MCF 10A (cell line): ENCODE measurements at regions of chr1 and their contacts with region 1.

Region 1: DNA sequence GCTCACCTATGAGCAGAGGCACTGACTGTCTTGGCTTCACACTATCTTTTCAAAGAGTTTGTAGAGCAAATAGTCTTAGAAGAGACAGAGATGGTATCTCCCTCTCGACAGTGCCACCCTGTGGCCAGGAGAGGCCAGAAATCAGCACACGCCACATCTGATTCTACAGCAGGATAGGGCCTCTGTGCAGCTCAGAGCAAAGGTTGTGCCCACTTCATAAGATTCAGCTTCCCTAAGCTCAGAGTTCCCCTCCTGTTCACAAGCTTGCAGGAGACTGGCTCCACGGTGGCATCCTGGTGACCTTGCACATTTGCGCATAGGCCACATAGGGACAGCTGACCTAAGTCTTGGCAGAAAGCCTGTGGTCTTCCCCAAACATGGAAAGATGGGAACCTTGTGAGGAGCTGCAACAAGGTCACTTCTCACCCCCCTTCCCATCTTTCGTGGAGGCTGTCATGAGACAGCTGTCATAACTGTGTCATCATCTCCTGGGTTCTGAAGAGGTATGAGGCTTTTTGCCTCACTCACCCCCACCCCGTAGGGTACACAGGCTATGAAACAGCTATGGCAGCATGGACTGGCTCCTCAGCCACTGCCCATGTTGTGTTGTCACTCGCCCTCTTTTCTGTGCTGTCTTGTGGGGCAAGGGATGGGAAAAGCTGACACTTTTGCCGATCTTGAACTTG is 3.0 kb downstream of the ITLN2 start:
- DNase-seq: peak; percentile 82
- H3K4me3 Mint-ChIP-seq: no peak overlapping the region
- H3K27ac Mint-ChIP-seq: peak overlapping the region; percentile 3
- H3K4me1 Mint-ChIP-seq: peaks cover 55% of the 10 kb centered on the region
- H3K27me3 Mint-ChIP-seq: no peaks in the 10 kb centered on the region
- CTCF ChIP-seq: peak; percentile 93

Region 2: DNA sequence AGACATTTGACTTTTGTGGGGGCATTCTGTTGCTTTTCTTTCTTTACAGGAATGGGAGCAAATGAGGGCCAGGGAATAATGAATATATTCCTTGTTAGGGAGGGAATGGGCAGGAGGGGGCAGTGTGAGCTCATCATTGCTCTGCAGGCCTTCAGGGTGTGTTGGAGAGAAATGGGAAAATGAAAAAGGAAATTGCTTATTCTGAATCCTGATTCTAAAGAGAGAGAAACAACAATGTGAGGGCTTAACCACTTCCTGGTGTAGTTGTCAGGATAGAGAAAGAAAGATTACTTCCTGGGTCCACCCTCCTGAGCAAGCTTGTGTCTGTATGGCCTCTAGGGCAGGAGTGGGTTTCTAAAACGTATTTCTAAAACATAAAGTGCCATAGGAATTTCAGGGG is 522.9 kb before region 1 on chr1:
- CTCF ChIA-PET with region 1: interaction called, 3 read pairs
- POLR2A ChIA-PET with region 1: no interaction called
- intact Hi-C with region 1: loop called (anchors 5 kb)
- DNase-seq: peak; percentile 70
- H3K4me3 Mint-ChIP-seq: no peak overlapping the region
- H3K27ac Mint-ChIP-seq: no peak overlapping the region
- H3K4me1 Mint-ChIP-seq: no peaks in the 10 kb centered on the region
- H3K27me3 Mint-ChIP-seq: peaks cover 8% of the 10 kb centered on the region
- CTCF ChIP-seq: peak; percentile 93

Region 3: DNA sequence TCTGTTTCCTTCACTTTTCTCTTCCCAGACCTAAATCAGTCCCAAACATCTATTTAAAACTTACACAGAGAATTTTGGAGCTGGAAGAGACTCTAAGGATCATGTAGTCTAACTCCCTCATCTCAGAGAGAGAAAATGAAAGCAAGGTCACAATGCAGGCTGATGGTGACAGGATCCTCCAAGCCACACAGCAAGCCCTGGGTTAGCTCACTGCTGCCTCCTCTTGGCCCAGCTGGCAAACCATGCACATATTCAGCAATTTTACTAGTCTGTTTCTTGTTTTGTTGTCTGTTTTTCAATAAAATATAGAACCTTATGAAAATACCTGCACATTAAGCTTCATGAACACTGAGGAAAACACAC is 183.3 kb before region 1 on chr1:
- CTCF ChIA-PET with region 1: interaction called, 10 read pairs
- POLR2A ChIA-PET with region 1: interaction called, 9 read pairs
- intact Hi-C with region 1: no loop called
- DNase-seq: peak; percentile 60
- H3K4me3 Mint-ChIP-seq: peak overlapping the region; percentile 56
- H3K27ac Mint-ChIP-seq: peak overlapping the region; percentile 75
- H3K4me1 Mint-ChIP-seq: peaks cover 17% of the 10 kb centered on the region
- H3K27me3 Mint-ChIP-seq: no peaks in the 10 kb centered on the region
- CTCF ChIP-seq: peak; percentile 70

Region 4: GRCh38 chr1:160837558-160838205 is 113.9 kb before region 1 on chr1:
- CTCF ChIA-PET with region 1: interaction called, 139 read pairs
- POLR2A ChIA-PET with region 1: interaction called, 20 read pairs
- intact Hi-C with region 1: loop called (anchors 1 kb)
- DNase-seq: no peak
- H3K4me3 Mint-ChIP-seq: no peak overlapping the region
- H3K27ac Mint-ChIP-seq: no peak overlapping the region
- H3K4me1 Mint-ChIP-seq: no peaks in the 10 kb centered on the region
- H3K27me3 Mint-ChIP-seq: no peaks in the 10 kb centered on the region
- CTCF ChIP-seq: no peak

Region 5: DNA sequence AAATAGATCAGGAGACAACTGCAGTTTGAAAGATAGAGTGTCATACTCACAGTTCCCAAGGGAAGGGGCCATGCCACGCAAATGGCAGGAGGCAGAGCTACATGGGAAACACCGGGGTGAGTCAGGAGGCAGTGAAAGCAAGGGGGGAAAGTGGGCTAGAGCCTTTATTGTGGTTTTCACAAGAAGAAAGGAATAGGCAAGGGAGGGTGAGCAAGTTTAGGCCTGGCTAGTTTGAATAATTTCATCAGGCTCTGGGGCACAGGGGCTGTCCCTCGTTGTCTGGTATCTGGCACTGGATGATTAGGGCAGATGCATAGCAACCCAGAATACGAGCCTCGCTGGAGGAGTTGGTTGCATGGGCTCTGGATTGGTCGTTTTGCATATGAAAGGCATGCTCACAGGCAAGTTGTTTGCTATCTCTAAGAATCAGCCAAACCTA is 20.1 kb after region 1 on chr1:
- CTCF ChIA-PET with region 1: interaction called, 37 read pairs
- POLR2A ChIA-PET with region 1: interaction called, 8 read pairs
- intact Hi-C with region 1: no loop called
- DNase-seq: no peak
- H3K4me3 Mint-ChIP-seq: no peak overlapping the region
- H3K27ac Mint-ChIP-seq: no peak overlapping the region
- H3K4me1 Mint-ChIP-seq: no peaks in the 10 kb centered on the region
- H3K27me3 Mint-ChIP-seq: peaks cover 9% of the 10 kb centered on the region
- CTCF ChIP-seq: no peak

Region 6: DNA sequence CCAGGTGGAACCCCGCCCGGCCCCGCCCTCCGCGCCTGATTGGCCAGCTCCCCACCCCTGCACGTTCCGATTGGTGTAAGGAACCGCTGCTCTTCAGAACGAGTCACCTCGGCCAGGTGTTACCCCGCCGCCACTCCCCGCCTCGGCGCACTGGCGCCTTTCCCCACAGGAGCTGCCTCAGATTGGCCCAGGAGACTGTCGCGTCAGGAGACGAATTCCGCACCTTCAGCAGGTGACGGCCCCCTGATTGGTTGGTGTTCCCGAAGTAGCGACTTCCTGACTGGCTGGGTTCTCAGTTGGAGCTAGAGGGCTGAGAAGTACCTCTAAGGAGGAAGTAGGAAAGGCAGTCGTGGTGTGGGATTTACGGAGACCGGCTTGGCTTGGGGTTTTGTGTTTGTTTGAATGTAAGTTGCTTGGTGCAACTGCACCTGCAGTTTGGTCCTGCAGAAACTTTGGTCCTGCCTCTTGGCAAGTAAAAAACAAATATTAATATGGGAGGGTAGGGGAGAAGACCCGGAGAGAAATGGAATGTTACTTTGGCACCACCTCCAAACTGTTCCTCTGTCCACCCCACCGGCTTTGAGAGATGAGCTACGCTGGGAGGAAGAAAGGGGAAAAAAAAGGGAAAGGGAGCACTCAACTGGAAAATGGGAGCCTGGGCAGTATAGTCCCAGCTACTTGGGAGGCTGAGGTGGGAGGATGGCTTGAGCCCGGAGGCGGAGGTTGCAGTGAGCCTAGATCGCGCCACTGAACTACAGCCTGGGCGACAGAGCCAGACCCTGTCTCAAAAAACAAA is 69.8 kb after region 1 on chr1:
- CTCF ChIA-PET with region 1: interaction called, 24 read pairs
- POLR2A ChIA-PET with region 1: interaction called, 88 read pairs
- intact Hi-C with region 1: no loop called
- DNase-seq: peak; percentile 99
- H3K4me3 Mint-ChIP-seq: peak overlapping the region; percentile 80
- H3K27ac Mint-ChIP-seq: peak overlapping the region; percentile 94
- H3K4me1 Mint-ChIP-seq: peaks cover 47% of the 10 kb centered on the region
- H3K27me3 Mint-ChIP-seq: no peaks in the 10 kb centered on the region
- CTCF ChIP-seq: no peak

Region 7: GRCh38 chr1:161117759-161118581 is 166.4 kb after region 1 on chr1 and contains the starts of genes NIT1 and PFDN2:
- CTCF ChIA-PET with region 1: interaction called, 4 read pairs
- POLR2A ChIA-PET with region 1: interaction called, 16 read pairs
- intact Hi-C with region 1: no loop called
- DNase-seq: peak; percentile 85
- H3K4me3 Mint-ChIP-seq: peak within 1 kb of the TSS; percentile 97
- H3K27ac Mint-ChIP-seq: peak within 1 kb of the TSS; percentile 95
- H3K4me1 Mint-ChIP-seq: peaks cover 50% of the 10 kb centered on the region
- H3K27me3 Mint-ChIP-seq: no peaks in the 10 kb centered on the region
- CTCF ChIP-seq: no peak
- total RNA-seq, gene NIT1: 73.4 and 75.4 TPM in 2 replicates
- total RNA-seq, gene PFDN2: 514 and 683 TPM in 2 replicates